Caco-2 (cell line): ENCODE measurements at regions of chr1 and their contacts with region 1.

Region 1: GRCh38 chr1:199914546-199914945 is 113.0 kb upstream of the NR5A2 start:
- DNase-seq: no peak
- H3K4me3 ChIP-seq: no peak overlapping the region
- H3K4me3 Mint-ChIP-seq: no peak overlapping the region
- H3K27ac Mint-ChIP-seq: no peak overlapping the region
- H3K4me1 ChIP-seq: no peaks in the 10 kb centered on the region
- H3K4me1 Mint-ChIP-seq: no peaks in the 10 kb centered on the region
- H3K27me3 ChIP-seq: no peaks in the 10 kb centered on the region
- H3K27me3 Mint-ChIP-seq: no peaks in the 10 kb centered on the region
- CTCF ChIP-seq: no peak

Region 2: GRCh38 chr1:199859491-199859933 is 55.0 kb before region 1 on chr1:
- CTCF ChIA-PET with region 1: no interaction called
- POLR2A ChIA-PET with region 1: no interaction called
- intact Hi-C with region 1: no loop called
- DNase-seq: no peak
- H3K4me3 ChIP-seq: no peak overlapping the region
- H3K4me3 Mint-ChIP-seq: no peak overlapping the region
- H3K27ac Mint-ChIP-seq: no peak overlapping the region
- H3K4me1 ChIP-seq: peaks cover 20% of the 10 kb centered on the region
- H3K4me1 Mint-ChIP-seq: peaks cover 19% of the 10 kb centered on the region
- H3K27me3 ChIP-seq: no peaks in the 10 kb centered on the region
- H3K27me3 Mint-ChIP-seq: no peaks in the 10 kb centered on the region
- CTCF ChIP-seq: no peak

Region 3: GRCh38 chr1:199945591-199945990 is 31.0 kb after region 1 on chr1:
- CTCF ChIA-PET with region 1: interaction called, 10 read pairs
- POLR2A ChIA-PET with region 1: interaction called, 7 read pairs
- intact Hi-C with region 1: no loop called
- DNase-seq: no peak
- H3K4me3 ChIP-seq: no peak overlapping the region
- H3K4me3 Mint-ChIP-seq: no peak overlapping the region
- H3K27ac Mint-ChIP-seq: no peak overlapping the region
- H3K4me1 ChIP-seq: no peaks in the 10 kb centered on the region
- H3K4me1 Mint-ChIP-seq: no peaks in the 10 kb centered on the region
- H3K27me3 ChIP-seq: no peaks in the 10 kb centered on the region
- H3K27me3 Mint-ChIP-seq: no peaks in the 10 kb centered on the region
- CTCF ChIP-seq: no peak